ENCODE measurements at regions of chr12 and their contacts with region 1.

Region 1: GRCh38 chr12:39272871-39273770 is 169.8 kb downstream of the KIF21A start:
- DNase-seq: peak in 4 of 5 donors; percentile 9 to 24 (median 20)
- H3K4me3 ChIP-seq: no peak overlapping the region
- H3K4me3 Mint-ChIP-seq: no peak overlapping the region
- H3K27ac ChIP-seq: no peak overlapping the region
- H3K27ac Mint-ChIP-seq: no peak overlapping the region
- H3K4me1 ChIP-seq: no peaks in the 10 kb centered on the region
- H3K4me1 Mint-ChIP-seq: peaks cover 0 to 5% (median 2%) of the 10 kb centered on the region in 4 donors
- H3K27me3 ChIP-seq: peaks cover 3% of the 10 kb centered on the region
- H3K27me3 Mint-ChIP-seq: peaks cover 7 to 10% of the 10 kb centered on the region in 2 donors

Region 2: DNA sequence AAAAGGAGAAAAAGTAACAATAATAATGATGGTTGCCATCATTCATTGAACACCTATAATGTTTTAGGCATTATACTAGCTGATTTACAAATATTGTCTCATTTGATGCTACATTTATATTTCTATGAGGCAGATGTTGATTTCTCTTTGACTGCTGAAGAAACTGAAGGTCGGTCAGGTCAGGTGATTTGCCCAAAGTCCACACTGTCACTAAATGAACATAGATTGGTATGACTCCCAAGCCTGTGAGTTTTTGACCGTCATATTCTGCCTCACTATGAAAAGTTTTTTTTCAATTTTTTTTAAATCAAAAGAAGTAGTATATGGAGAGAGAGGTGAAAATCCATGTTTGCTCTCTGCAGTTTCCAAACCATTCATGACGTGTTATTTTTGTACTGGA is 945.8 kb before region 1 on chr12:
- CTCF ChIA-PET with region 1: interaction called, 16 read pairs
- POLR2A ChIA-PET with region 1: no interaction called
- intact Hi-C with region 1: no loop called
- DNase-seq: no peak
- H3K4me3 ChIP-seq: no peak overlapping the region
- H3K4me3 Mint-ChIP-seq: no peak overlapping the region
- H3K27ac ChIP-seq: no peak overlapping the region
- H3K27ac Mint-ChIP-seq: no peak overlapping the region
- H3K4me1 ChIP-seq: peaks cover 3% of the 10 kb centered on the region
- H3K4me1 Mint-ChIP-seq: peaks cover 0 to 2% (median 0%) of the 10 kb centered on the region in 4 donors
- H3K27me3 ChIP-seq: no peaks in the 10 kb centered on the region
- H3K27me3 Mint-ChIP-seq: no peaks in the 10 kb centered on the region

Region 3: DNA sequence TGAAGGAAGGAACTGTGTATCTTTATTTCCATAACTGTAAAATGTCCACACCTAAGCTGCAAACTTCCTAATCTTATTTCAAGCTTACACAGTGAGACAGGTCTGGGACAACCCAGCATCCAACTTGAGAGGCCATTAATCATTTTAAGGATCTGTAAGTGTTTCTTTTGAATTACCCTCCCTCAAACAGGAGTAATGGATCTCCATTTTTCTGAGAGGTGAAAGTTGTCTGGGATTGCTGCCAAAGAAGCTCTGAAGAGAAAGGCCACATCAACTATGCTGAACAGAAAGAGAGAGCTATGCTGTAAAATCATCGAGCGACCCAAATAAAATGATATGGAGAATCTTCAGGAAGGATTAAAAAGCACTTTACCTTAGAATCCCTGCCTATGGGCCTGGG is 236.0 kb before region 1 on chr12:
- CTCF ChIA-PET with region 1: no interaction called
- POLR2A ChIA-PET with region 1: no interaction called
- intact Hi-C with region 1: no loop called
- DNase-seq: no peak
- H3K4me3 ChIP-seq: no peak overlapping the region
- H3K4me3 Mint-ChIP-seq: no peak overlapping the region
- H3K27ac ChIP-seq: no peak overlapping the region
- H3K27ac Mint-ChIP-seq: no peak overlapping the region
- H3K4me1 ChIP-seq: no peaks in the 10 kb centered on the region
- H3K4me1 Mint-ChIP-seq: no peaks in the 10 kb centered on the region
- H3K27me3 ChIP-seq: no peaks in the 10 kb centered on the region
- H3K27me3 Mint-ChIP-seq: peaks cover 0 to 2% of the 10 kb centered on the region in 2 donors

Region 4: GRCh38 chr12:39105111-39105510 is 168.0 kb before region 1 on chr12:
- CTCF ChIA-PET with region 1: no interaction called
- POLR2A ChIA-PET with region 1: no interaction called
- intact Hi-C with region 1: no loop called
- DNase-seq: no peak
- H3K4me3 ChIP-seq: no peak overlapping the region
- H3K4me3 Mint-ChIP-seq: no peak overlapping the region
- H3K27ac ChIP-seq: no peak overlapping the region
- H3K27ac Mint-ChIP-seq: no peak overlapping the region
- H3K4me1 ChIP-seq: no peaks in the 10 kb centered on the region
- H3K4me1 Mint-ChIP-seq: peaks cover 0 to 3% (median 0%) of the 10 kb centered on the region in 4 donors
- H3K27me3 ChIP-seq: no peaks in the 10 kb centered on the region
- H3K27me3 Mint-ChIP-seq: peaks cover 0 to 4% of the 10 kb centered on the region in 2 donors

Region 5: DNA sequence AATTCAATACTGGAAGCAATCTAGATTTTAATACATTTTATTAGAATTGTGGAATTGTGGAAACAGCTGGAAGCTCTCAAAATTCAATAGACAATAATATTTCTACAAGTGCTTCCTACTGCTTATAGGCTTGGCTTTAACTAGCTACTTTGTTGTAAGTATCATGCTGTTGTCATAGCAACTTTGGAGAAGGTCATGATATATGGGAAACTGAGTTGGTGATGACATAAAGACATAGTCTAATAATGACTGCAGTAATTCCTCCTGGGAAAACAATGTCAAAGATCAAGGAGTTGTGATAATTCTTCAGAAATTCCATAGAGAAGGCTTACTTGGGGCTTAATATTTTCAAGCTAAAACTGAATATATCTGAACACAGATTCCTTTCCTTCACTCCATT is 96.8 kb before region 1 on chr12:
- CTCF ChIA-PET with region 1: no interaction called
- POLR2A ChIA-PET with region 1: no interaction called
- intact Hi-C with region 1: no loop called
- DNase-seq: no peak
- H3K4me3 ChIP-seq: no peak overlapping the region
- H3K4me3 Mint-ChIP-seq: no peak overlapping the region
- H3K27ac ChIP-seq: no peak overlapping the region
- H3K27ac Mint-ChIP-seq: no peak overlapping the region
- H3K4me1 ChIP-seq: no peaks in the 10 kb centered on the region
- H3K4me1 Mint-ChIP-seq: no peaks in the 10 kb centered on the region
- H3K27me3 ChIP-seq: no peaks in the 10 kb centered on the region
- H3K27me3 Mint-ChIP-seq: peaks cover 0 to 1% of the 10 kb centered on the region in 2 donors

Region 6: DNA sequence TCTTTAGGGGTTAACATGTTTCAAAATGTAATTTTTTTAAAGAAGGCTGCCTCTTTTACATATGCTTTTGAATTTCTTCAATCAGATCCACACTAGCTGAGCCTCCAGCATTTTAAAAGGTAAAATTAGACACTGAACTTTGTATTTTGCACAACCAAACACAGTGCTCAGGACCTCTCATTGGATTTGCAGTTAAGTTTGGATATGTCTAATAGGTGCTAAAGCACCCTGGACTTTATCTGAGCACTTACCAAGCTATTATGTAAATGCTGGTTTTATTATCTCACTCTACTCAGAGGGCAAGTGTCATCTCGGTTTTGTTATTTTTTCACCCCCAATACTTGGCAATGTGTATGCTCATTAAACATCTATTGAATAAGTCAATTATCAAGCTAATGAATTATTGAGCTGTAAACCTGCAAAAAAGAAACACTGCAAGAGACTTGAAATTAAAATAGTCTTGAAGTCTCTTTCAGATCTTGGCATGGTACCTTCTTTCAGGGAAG is 19.1 kb after region 1 on chr12:
- CTCF ChIA-PET with region 1: interaction called, 11 read pairs
- POLR2A ChIA-PET with region 1: no interaction called
- intact Hi-C with region 1: no loop called
- DNase-seq: no peak
- H3K4me3 ChIP-seq: no peak overlapping the region
- H3K4me3 Mint-ChIP-seq: no peak overlapping the region
- H3K27ac ChIP-seq: no peak overlapping the region
- H3K27ac Mint-ChIP-seq: no peak overlapping the region
- H3K4me1 ChIP-seq: no peaks in the 10 kb centered on the region
- H3K4me1 Mint-ChIP-seq: peaks cover 0 to 2% (median under 1%) of the 10 kb centered on the region in 4 donors
- H3K27me3 ChIP-seq: no peaks in the 10 kb centered on the region
- H3K27me3 Mint-ChIP-seq: peaks cover 0 to 2% of the 10 kb centered on the region in 2 donors